Dendritic cell treated with granulocyte-macrophage colony-stimulating factor and Interleukin-4, amounts not matched to agents 40 ng/mL and 50 ng/mL, for 4 days (primary cell): ENCODE measurements at regions of chr5 and their contacts with region 1.

Region 1: GRCh38 chr5:10424124-10424731 is 17.5 kb upstream of the ROPN1L start:
- H3K4me3 Mint-ChIP-seq: no peak overlapping the region
- H3K27ac Mint-ChIP-seq: no peak overlapping the region
- H3K4me1 Mint-ChIP-seq: peaks cover 36% of the 10 kb centered on the region
- H3K27me3 Mint-ChIP-seq: no peaks in the 10 kb centered on the region

Region 2: DNA sequence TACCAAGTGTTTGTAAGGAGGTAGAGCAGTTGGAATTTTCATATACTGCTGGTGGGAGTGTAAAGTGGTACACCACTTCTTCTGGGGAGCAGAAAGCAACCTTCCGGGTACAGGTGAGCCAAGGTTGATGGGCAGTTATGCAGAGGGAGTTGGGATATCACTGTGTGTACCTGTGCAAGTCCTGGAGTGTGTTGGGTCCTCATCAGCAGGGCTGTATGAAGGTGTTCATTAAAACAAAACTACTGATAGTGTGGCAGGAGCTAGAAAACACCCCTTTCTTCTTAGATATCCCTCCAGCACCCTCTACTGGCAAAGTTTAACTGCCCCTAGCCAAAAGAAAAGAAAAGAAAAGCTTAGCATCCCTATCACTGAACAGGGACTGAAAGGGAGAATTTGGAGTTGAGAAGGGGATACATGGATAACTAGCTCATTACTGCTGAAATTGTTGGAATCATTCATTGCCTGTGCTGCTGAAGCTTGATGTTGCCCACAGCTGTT is 60.0 kb before region 1 on chr5:
- intact Hi-C with region 1: loop called (anchors 5 kb)
- H3K4me3 Mint-ChIP-seq: no peak overlapping the region
- H3K27ac Mint-ChIP-seq: no peak overlapping the region
- H3K4me1 Mint-ChIP-seq: peaks cover 46% of the 10 kb centered on the region
- H3K27me3 Mint-ChIP-seq: no peaks in the 10 kb centered on the region